HEK293 (cell line): ENCODE measurements at regions of chr5 and their contacts with region 1.

Region 1: DNA sequence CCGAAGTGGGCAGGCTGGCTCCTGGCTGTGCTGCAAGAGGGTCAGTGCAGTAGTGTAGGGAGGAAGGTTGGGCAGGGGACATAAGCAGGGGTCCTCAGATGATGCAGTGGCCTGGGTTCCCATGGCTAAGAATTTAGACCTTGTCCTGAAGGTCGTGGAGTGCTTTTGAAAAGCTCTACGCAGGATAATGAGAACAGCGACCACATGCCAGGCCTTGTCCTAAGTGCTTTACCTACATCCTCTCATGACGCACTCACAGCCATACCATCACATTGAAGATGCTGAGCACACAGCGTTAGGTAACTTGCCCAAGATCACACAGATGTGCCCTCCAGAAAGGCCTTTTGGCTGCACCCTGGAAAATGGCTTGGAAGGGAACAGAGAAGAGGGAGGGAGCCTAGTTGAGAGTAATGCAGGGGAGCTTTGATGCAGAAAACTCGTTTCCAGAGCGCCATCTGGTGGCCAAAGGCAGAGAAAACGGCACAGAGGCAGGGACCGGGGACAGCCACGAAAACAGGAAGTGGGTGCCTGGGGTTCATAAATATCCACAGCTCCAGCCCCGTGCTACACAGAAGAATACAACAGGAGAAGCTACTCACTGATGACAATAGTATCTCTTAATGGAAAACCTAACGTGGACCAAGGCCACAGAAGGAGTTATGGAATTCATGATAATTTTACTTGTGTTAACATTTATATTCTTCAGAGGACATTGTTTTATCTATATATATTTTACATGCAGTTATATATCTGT is 2.6 kb upstream of the PCDH12 start:
- H3K4me3 ChIP-seq: no peak overlapping the region
- H3K27ac ChIP-seq: no peak overlapping the region
- H3K4me1 ChIP-seq: no peaks in the 10 kb centered on the region
- CTCF ChIP-seq: peak; percentile 87

Region 2: GRCh38 chr5:141681695-141682641 is 278.7 kb before region 1 on chr5 and contains the start of gene ARAP3:
- CTCF ChIA-PET with region 1: interaction called, 14 read pairs
- POLR2A ChIA-PET with region 1: no interaction called
- H3K4me3 ChIP-seq: peak within 1 kb of the TSS; percentile 52
- H3K27ac ChIP-seq: peak within 1 kb of the TSS; percentile 52; the same call in 1 of the 2 replicates
- H3K4me1 ChIP-seq: no peaks in the 10 kb centered on the region
- CTCF ChIP-seq: no peak

Region 3: DNA sequence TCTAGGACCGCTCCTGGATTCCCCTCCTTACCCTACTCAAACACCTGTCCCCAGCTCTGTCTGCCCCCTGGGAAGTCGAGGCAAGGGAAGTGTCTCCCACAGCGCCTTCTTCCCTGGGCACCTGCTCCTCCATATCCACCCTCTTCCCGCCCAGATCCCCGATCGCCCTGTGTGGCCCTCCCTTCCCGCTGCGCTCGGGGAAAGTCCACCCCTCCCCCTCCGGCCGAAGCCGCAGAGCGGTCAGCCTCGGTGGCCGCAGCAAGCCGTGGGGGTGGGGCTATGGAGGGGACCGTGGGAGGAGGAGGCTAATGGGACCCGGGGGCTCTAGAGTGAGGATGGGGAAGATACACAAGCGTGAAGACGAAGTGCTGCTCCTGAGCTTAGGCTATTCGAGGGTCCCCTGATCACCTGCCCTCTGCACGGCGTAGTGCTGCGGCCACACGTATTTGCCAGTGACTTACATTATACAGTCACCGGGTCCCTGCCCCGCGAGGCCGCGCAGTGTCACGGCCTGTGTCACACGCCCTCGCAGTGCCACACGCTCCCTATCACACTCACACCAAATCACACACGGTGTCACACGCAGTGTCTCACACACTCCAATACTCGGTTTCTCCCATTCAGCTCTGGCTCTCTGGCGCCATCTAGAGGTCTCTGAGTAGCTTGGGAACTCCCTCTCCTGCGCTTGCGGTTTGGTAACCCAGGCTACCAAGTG is 81.8 kb before region 1 on chr5:
- CTCF ChIA-PET with region 1: interaction called, 56 read pairs
- POLR2A ChIA-PET with region 1: no interaction called
- H3K4me3 ChIP-seq: peak overlapping the region; percentile 30
- H3K27ac ChIP-seq: peak overlapping the region; percentile 7; the same call in 1 of the 2 replicates
- H3K4me1 ChIP-seq: peaks cover 8% of the 10 kb centered on the region
- CTCF ChIP-seq: peak; percentile 96

Region 4: GRCh38 chr5:141914199-141914743 is 46.4 kb before region 1 on chr5:
- CTCF ChIA-PET with region 1: interaction called, 15 read pairs
- POLR2A ChIA-PET with region 1: no interaction called
- H3K4me3 ChIP-seq: no peak overlapping the region
- H3K27ac ChIP-seq: no peak overlapping the region
- H3K4me1 ChIP-seq: no peaks in the 10 kb centered on the region
- CTCF ChIP-seq: peak; percentile 41

Region 5: DNA sequence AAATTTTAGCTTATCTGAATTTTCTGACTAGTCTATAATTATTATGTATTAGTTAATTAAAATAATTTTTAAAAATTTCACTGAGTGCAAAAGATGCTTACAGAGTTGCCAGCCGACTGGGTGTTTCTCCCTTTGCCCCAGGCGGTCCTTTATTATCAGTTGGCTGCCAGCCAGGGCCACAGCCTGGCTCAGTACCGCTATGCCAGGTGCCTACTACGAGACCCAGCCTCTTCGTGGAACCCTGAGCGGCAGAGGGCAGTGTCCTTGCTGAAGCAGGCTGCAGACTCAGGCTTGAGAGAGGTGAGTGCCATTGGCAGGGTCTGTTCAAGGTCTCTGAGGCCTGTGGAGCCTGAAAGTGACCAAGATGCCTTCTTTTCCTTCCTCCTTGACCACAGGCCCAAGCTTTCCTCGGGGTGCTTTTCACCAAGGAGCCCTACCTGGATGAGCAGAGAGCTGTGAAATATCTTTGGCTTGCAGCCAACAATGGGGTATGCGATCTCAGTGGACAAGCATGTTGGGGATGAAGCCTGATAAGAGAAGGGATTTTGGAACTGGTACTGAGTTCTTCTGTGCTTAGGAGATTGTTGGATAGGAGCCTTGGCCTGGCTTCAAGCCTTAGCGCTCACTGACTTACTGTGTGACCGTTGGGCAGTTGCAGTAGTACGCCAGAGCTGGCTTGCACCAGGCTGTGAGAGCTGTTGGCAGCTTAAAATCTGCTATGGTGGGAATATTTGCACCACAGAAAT is 26.4 kb before region 1 on chr5:
- CTCF ChIA-PET with region 1: interaction called, 12 read pairs
- POLR2A ChIA-PET with region 1: no interaction called
- H3K4me3 ChIP-seq: no peak overlapping the region
- H3K27ac ChIP-seq: no peak overlapping the region
- H3K4me1 ChIP-seq: no peaks in the 10 kb centered on the region
- CTCF ChIP-seq: no peak

Region 6: GRCh38 chr5:141976176-141976575 is 15.6 kb after region 1 on chr5:
- CTCF ChIA-PET with region 1: interaction called, 41 read pairs
- POLR2A ChIA-PET with region 1: no interaction called
- H3K4me3 ChIP-seq: no peak overlapping the region
- H3K27ac ChIP-seq: no peak overlapping the region
- H3K4me1 ChIP-seq: no peaks in the 10 kb centered on the region; the same call in 1 of the 2 replicates
- CTCF ChIP-seq: no peak

Region 7: DNA sequence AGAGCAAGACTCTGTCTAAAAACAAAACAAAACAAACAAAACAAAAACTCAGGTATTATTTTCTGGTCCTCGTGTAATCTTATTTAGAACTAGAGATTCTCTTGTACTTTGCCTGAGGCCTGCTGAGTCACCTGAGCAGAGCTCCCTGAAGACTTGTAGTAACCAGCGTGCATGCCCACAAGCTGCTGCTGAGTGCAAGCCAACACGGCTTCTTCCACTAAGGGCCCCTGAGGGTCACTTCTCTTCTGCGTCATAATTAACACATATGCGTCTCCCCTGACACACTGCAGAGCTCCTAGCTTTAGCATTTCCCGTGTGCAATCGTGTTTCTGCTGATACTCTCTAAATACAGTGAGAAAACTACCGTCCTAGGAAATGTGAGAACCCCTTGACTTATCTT is 137.0 kb after region 1 on chr5:
- CTCF ChIA-PET with region 1: no interaction called
- POLR2A ChIA-PET with region 1: no interaction called
- H3K4me3 ChIP-seq: no peak overlapping the region
- H3K27ac ChIP-seq: peak overlapping the region; percentile 20; the same call in 1 of the 2 replicates
- H3K4me1 ChIP-seq: peaks cover 12% of the 10 kb centered on the region
- CTCF ChIP-seq: no peak